ENCODE measurements at regions of chr2 and their contacts with region 1.

Region 1: GRCh38 chr2:172596776-172597175 is 40.9 kb downstream of the PDK1 start:
- DNase-seq: no peak
- ATAC-seq: no peak
- H3K4me3 ChIP-seq: no peak overlapping the region
- H3K27ac ChIP-seq: no peak overlapping the region
- H3K4me1 ChIP-seq: peaks cover 0 to 7% of the 10 kb centered on the region in 2 donors
- H3K27me3 ChIP-seq: no peaks in the 10 kb centered on the region

Region 2: GRCh38 chr2:172674034-172674967 is 77.5 kb after region 1 on chr2:
- intact Hi-C with region 1: loop called (anchors 2 to 5 kb)
- DNase-seq: peak; percentile 60 to 83
- ATAC-seq: peak; percentile 87
- H3K4me3 ChIP-seq: no peak overlapping the region
- H3K27ac ChIP-seq: no peak overlapping the region
- H3K4me1 ChIP-seq: no peaks in the 10 kb centered on the region
- H3K27me3 ChIP-seq: no peaks in the 10 kb centered on the region

Region 3: DNA sequence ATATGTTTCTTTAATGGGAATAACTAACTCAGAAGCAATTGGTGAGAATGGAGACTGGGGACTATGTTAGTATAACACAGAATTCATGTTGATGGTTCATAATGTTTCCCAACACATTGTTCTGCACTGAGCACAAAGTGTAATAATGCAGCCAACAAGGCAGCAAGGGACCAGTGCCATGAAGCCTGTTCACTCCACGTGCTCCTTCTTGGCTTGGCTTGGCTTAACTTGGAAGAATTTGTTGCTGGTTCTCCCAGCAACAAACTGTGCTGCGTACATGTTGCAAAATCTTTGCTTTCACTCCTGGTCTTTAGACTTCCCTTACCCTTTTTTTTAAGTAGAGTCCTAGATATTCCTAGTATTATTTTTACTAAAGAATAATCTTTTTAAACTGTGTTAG is 608.6 kb after region 1 on chr2:
- intact Hi-C with region 1: loop called in 1 of 2 experiments (anchors 10 kb)
- DNase-seq: peak; percentile 85
- ATAC-seq: peak; percentile 95
- H3K4me3 ChIP-seq: no peak overlapping the region
- H3K27ac ChIP-seq: no peak overlapping the region
- H3K4me1 ChIP-seq: peaks cover 2 to 6% of the 10 kb centered on the region in 2 donors
- H3K27me3 ChIP-seq: no peaks in the 10 kb centered on the region

Measured in aorta (tissue), 5 donors.